H1 (cell line): ENCODE measurements at regions of chr2 and their contacts with region 1.

Region 1: DNA sequence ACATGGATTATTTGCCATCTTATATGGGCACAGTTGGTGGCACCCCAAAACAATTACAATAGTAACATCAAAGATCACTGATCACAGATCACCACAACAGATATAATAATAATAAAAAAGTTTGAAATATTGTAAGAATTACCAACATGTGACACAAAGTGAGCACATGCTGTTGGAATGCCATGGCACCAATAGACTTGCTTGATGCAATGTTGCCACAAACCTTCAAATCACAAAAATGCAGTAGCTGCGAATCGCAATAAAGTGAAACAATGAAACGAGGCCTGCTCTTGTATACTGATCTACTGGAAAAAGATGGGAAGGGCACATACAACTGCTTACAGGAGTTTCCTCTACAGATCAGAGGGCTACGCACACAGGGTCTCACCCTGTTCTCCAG is 32.2 kb upstream of the AMMECR1L start:
- DNase-seq: no peak
- H3K4me3 ChIP-seq: no peak overlapping the region
- H3K27ac ChIP-seq: no peak overlapping the region
- H3K4me1 ChIP-seq: no peaks in the 10 kb centered on the region
- H3K27me3 ChIP-seq: no peaks in the 10 kb centered on the region
- CTCF ChIP-seq: no peak
- EP300 ChIP-seq: no peak
- POLR2A ChIP-seq: no peak
- RAD21 ChIP-seq: no peak

Region 2: DNA sequence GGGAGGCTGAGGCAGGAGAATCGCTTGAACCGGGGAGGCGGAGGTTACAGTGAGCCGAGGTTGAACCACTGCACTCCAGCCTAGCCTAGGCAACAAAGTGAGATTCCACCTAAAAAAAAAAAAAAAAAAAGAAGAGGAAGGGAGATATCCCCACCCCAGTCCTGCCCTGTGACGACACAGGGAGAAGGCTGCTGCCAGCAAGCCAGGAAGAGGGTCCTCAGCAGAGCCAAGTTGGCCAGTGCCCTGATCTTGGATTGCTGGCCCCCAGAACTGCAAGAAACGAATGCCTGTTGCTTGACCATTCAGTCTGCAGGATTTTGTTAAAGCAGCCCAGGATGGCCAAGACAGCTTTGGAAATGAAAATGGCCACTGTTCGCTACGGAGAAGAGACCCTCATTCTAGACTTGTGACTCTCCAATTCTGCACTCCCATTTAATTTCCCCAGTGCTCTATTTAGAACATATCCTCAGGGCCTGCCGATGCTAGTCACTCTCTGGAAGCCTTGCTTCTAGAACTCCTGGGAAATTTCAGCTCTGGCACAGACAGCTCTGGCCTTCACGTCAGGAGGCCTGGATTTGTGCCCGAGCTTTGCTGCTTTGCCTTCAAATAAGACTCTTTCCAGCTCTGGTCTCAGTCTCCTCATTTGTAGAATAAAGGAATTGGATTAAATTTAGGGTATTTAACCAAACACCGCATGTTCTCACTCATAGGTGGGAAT is 16.4 kb before region 1 on chr2:
- CTCF ChIA-PET with region 1: interaction called, 11 read pairs
- POLR2A ChIA-PET with region 1: no interaction called
- DNase-seq: no peak
- H3K4me3 ChIP-seq: no peak overlapping the region
- H3K27ac ChIP-seq: no peak overlapping the region
- H3K4me1 ChIP-seq: peaks cover 0 to 3% (median 0%) of the 10 kb centered on the region in 4 experiments; a peak in 2 of 7 replicates
- H3K27me3 ChIP-seq: no peaks in the 10 kb centered on the region; a peak in 1 of 7 replicates
- CTCF ChIP-seq: no peak
- EP300 ChIP-seq: no peak
- POLR2A ChIP-seq: no peak
- RAD21 ChIP-seq: no peak